ENCODE measurements at regions of chr13 and their contacts with region 1.

Region 1: DNA sequence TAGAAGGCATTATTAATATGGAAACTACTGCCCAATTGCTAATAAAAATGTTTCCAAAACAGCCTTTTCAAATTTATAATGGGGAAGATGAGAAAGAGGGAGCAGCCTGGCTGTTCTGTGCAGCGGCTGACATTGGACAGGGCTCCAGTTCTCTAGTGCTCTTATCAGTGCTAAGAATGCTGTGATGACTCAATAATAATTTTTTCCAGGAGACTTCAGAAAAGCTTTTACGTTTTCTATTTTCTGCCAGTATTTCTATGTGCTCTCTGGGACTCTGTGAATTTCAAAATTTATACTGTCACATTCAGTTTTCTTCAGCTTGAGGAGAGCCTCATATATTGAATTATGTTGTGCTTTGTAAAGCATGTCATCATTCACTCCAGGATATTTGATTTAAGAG is 209.6 kb downstream of the VWA8 start:
- DNase-seq: peak; percentile 84

Region 2: GRCh38 chr13:41700790-41701310 is 50.4 kb before region 1 on chr13:
- intact Hi-C with region 1: loop called in 1 of 2 experiments (anchors 10 kb)
- DNase-seq: no peak

Region 3: GRCh38 chr13:41848435-41849255 is 97.4 kb after region 1 on chr13:
- intact Hi-C with region 1: no loop called
- DNase-seq: no peak